Activated CD4-positive, alpha-beta memory T cell treated with anti-CD3 and anti-CD28 coated beads, Interleukin-2, amount 10 ng/mL, durations not matched to agents 7 days and 5 days (primary cell): ENCODE measurements at regions of chr7 and their contacts with region 1.

Region 1: GRCh38 chr7:32846701-32847100 is 44.9 kb downstream of the KBTBD2 start:
- DNase-seq: peak; percentile 89
- H3K4me3 Mint-ChIP-seq: no peak overlapping the region
- H3K27ac Mint-ChIP-seq: no peak overlapping the region
- H3K4me1 Mint-ChIP-seq: peaks cover 14% of the 10 kb centered on the region
- H3K27me3 Mint-ChIP-seq: peaks cover 23% of the 10 kb centered on the region

Region 2: DNA sequence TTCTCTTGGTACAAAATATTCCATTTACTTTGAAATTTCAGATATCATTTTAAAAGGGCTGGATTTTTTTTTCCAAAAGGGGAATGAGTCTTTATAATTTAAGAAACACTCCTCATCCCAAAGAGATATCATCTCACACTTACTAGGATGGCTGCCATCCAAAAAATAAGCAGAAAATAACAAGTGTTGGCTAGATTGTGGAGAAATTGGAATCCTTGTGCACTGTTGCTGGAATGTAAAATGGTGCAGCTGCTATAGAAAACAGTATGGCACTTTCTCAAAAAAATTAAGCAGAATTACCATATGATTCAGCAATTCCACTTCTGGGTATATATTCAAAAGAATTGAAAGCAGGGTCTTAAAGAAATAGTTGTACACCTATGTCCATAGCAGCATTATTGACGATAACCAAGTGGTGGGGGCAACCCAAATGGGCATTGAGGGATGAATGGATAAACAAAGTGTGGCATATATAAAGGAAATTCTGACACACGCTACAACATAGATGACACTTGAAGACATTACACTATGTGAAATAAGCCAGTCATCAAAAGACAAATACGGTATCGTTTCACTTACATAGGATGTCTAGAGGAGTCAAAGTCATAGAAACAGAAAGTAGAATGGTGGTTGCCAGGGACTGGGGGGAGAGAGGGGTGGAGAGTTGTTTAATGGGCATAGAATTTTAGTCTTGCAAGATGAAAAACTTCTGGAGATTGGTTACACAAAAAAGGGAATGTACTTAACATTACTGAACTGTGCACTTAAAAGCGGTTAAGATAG is 410.4 kb before region 1 on chr7:
- CTCF ChIA-PET with region 1: no interaction called
- POLR2A ChIA-PET with region 1: no interaction called
- DNase-seq: no peak
- H3K4me3 Mint-ChIP-seq: no peak overlapping the region
- H3K27ac Mint-ChIP-seq: no peak overlapping the region
- H3K4me1 Mint-ChIP-seq: no peaks in the 10 kb centered on the region
- H3K27me3 Mint-ChIP-seq: no peaks in the 10 kb centered on the region

Region 3: DNA sequence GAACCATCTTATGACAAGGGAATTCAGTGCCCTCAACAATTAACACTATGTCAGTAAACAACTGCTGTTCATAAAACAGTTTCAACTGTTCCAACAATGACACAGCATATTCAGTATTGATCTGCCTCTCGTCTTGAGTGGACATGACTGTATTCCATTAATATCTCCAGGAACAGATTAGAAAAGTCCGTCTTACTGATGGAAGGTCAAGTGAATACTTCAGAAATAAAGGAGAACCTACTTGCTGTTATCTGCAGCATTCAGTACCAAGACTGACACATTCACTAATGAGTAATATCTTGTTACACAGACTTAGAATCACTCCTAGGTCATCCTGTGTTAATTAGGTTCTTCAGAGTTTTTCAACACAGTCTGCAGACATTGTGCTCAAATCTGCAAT is 32.8 kb after region 1 on chr7:
- CTCF ChIA-PET with region 1: interaction called, 19 read pairs
- POLR2A ChIA-PET with region 1: no interaction called
- DNase-seq: no peak
- H3K4me3 Mint-ChIP-seq: no peak overlapping the region
- H3K27ac Mint-ChIP-seq: no peak overlapping the region
- H3K4me1 Mint-ChIP-seq: peaks cover 33% of the 10 kb centered on the region
- H3K27me3 Mint-ChIP-seq: no peaks in the 10 kb centered on the region

Region 4: GRCh38 chr7:32905175-32905662 is 58.5 kb after region 1 on chr7:
- CTCF ChIA-PET with region 1: interaction called, 21 read pairs
- POLR2A ChIA-PET with region 1: interaction called, 4 read pairs
- DNase-seq: peak; percentile 90
- H3K4me3 Mint-ChIP-seq: peak overlapping the region; percentile 75
- H3K27ac Mint-ChIP-seq: peak overlapping the region; percentile 95
- H3K4me1 Mint-ChIP-seq: peaks cover 19% of the 10 kb centered on the region
- H3K27me3 Mint-ChIP-seq: no peaks in the 10 kb centered on the region

Region 5: DNA sequence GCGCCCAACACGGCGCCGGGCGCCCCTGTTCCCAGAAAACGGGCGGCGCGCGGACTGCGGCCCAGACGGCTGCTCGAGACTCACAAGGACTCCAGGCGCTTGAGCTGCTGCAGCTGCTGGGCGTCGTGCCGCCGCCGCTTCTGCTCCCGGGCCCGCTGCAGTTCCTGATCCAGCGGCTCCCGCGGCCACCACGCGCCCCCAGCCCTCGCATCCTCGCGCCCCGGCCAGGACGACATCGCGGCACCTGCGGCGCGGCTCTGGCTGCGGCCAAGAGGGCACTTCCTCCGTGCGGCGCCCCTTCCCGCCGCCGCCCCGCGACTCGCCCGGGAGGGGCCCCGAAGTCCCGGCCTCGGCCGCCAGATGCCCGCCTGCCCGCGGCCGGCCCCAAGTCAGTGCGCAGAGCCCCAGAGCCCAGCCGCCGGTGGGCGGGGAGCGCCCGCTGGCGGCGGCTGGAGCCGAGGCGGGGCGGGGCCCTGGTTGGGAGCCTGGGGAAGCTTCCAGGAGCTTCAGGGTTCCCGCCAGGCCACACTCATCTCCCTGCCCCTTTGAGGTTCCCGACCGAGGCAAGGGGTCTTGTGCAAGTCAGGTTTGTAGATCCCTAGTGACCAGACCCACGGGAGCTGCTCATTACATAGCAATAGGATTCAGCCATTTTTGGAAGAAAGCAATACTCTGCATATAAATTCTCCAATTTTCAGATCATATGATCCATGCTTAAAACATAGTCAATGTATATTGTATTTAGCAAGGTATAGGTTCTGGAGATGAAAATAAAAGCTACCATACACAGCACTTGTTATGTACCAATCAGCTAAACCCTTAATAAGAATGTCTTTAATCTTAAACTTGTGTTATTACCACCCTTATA is 96.3 kb after region 1 on chr7:
- CTCF ChIA-PET with region 1: interaction called, 67 read pairs
- POLR2A ChIA-PET with region 1: interaction called, 5 read pairs
- DNase-seq: peak; percentile 73
- H3K4me3 Mint-ChIP-seq: peak overlapping the region; percentile 90
- H3K27ac Mint-ChIP-seq: no peak overlapping the region
- H3K4me1 Mint-ChIP-seq: peaks cover 20% of the 10 kb centered on the region
- H3K27me3 Mint-ChIP-seq: peaks cover 12% of the 10 kb centered on the region

Region 6: DNA sequence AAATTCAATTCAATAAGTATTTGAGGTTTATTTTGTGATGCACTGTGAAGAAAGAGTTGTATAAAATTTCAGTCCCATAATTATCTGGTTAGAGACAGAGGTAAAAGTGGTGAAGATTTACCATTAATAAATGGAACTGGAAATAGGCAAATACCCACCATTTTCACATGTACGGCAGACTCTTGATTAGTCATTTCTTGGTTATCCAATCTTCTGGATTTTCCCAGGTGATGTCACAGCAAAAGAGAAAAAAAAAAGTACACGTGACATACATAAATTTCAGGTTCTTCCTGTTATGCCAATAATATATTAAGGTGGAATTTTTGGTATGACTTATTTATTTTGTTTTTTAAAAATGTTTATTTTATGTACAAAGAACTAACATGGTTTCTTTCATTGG is 189.1 kb after region 1 on chr7:
- CTCF ChIA-PET with region 1: interaction called, 24 read pairs
- POLR2A ChIA-PET with region 1: no interaction called
- DNase-seq: no peak
- H3K4me3 Mint-ChIP-seq: no peak overlapping the region
- H3K27ac Mint-ChIP-seq: no peak overlapping the region
- H3K4me1 Mint-ChIP-seq: peaks cover 39% of the 10 kb centered on the region
- H3K27me3 Mint-ChIP-seq: no peaks in the 10 kb centered on the region

Region 7: GRCh38 chr7:33050535-33051318 is 204.0 kb after region 1 on chr7:
- CTCF ChIA-PET with region 1: interaction called, 34 read pairs
- POLR2A ChIA-PET with region 1: no interaction called
- DNase-seq: no peak
- H3K4me3 Mint-ChIP-seq: no peak overlapping the region
- H3K27ac Mint-ChIP-seq: no peak overlapping the region
- H3K4me1 Mint-ChIP-seq: peaks cover 49% of the 10 kb centered on the region
- H3K27me3 Mint-ChIP-seq: no peaks in the 10 kb centered on the region

Region 8: GRCh38 chr7:33109005-33109757 is 262.5 kb after region 1 on chr7 and contains the start of gene RP9:
- CTCF ChIA-PET with region 1: interaction called, 59 read pairs
- POLR2A ChIA-PET with region 1: interaction called, 7 read pairs
- DNase-seq: peak; percentile 80
- H3K4me3 Mint-ChIP-seq: peak within 1 kb of the TSS; percentile 83
- H3K27ac Mint-ChIP-seq: peak within 1 kb of the TSS; percentile 54
- H3K4me1 Mint-ChIP-seq: peaks cover 31% of the 10 kb centered on the region
- H3K27me3 Mint-ChIP-seq: peaks cover 19% of the 10 kb centered on the region
- total RNA-seq, gene RP9: 9.7 to 11.5 TPM